ENCODE measurements at regions of chr1 and their contacts with region 1.

Region 1: GRCh38 chr1:227886993-227887696 is 60.6 kb downstream of the WNT9A start:
- DNase-seq: peak; percentile 73 to 81
- ATAC-seq: peak; percentile 60 to 86 (median 78)
- H3K4me3 ChIP-seq: peak overlapping the region; percentile 40 to 61 (median 53)
- H3K27ac ChIP-seq: peak overlapping the region; percentile 73 to 95 (median 86)
- H3K4me1 ChIP-seq: peaks cover 15 to 31% (median 24%) of the 10 kb centered on the region in 9 donors
- H3K27me3 ChIP-seq: peaks cover 0 to 13% (median 0%) of the 10 kb centered on the region in 7 donors
- CTCF ChIP-seq: no peak

Region 2: DNA sequence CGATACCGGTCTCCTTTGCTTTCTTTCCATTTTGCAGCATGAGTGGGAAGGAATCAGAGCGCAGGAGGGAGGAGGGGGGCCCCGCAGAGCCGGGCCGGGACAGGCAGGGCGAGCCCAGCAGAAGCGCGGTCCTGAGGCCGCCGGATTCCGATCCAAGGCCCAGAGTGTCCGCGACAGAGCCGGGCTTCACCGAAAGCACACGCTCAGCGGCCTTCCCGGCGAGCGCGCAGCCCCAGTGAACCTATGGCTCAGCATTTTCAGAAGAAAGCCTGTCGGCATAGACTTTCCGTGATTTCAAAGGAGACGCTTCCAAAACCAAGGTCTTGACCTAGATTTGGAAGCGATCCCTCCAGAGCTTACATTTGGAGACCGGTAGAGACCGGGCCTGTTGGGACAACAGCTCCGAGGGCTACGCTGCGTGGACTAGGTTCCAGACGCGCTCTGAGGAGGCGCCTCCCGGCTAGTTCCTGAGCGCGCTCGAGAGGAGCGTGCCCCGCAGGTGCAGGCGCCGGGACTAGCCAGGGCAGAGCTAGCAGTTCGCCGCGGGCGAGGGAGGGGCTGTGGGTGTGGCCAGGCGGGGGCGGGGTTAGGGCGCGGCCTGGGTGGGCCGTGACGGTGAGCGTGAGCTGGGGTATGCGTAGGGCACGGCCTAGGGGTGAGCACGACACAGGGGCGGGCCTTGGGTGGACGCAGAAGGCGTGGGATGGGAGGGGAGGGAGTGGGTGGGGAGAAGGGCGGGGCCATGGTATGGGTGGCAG is 99.5 kb before region 1 on chr1:
- intact Hi-C with region 1: loop called in 2 of 10 experiments (anchors 5 to 10 kb)
- DNase-seq: peak; percentile 91 to 92
- ATAC-seq: peak; percentile 94 to 97 (median 95)
- H3K4me3 ChIP-seq: peak overlapping the region; percentile 33 to 72 (median 62)
- H3K27ac ChIP-seq: peak overlapping the region in 9 of 10 donors; percentile 53 to 82 (median 70)
- H3K4me1 ChIP-seq: peaks cover 10 to 27% (median 23%) of the 10 kb centered on the region in 9 donors
- H3K27me3 ChIP-seq: peaks cover 0 to 33% (median 0%) of the 10 kb centered on the region in 7 donors
- CTCF ChIP-seq: no peak

Region 3: DNA sequence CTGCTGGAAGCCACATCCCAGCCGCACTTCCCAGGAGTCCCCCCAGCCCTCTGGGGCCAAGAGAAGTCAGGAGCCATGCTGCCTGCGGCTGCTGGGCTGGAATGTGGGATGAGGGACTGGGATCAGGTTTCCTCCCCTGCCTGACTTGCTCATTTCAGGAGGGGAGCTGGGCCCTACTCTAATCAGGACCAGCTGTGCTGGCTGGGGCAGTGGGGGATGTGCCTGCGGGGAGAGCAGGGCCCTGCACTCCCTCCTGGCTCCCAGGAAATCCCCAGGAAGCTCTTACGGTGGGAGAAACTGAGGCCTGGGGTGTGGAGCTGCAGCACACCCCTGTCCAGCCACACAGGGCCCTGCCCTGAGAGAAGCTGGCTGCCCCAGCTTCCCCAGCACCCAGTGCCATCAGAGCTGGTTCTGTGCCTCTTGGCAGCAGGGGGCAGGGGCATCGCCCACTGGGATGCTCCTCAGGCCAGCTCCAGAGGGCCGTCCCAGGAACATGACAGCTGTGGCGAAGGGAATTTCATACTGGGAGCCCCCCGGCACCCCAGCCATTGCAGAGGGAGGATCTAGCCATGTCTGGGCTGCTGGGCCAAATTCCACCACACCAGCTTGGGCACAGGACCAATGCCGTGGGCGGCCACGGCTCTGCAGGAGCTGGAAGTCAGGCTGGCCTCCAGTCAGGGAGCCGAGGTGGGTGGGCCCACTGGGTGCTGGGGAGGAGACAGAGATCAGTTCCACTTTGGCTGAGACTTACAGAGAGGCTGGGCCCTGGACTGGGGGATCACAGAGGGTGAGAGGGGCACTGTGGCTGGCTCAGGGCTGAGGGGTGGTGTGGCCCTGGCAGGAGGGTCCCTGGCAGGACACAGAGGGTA is 93.0 kb before region 1 on chr1:
- intact Hi-C with region 1: loop called in 2 of 10 experiments (anchors 5 to 10 kb)
- DNase-seq: peak; percentile 54 to 55
- ATAC-seq: peak; percentile 35 to 69 (median 57)
- H3K4me3 ChIP-seq: no peak overlapping the region
- H3K27ac ChIP-seq: peak overlapping the region in 3 of 10 donors; percentile 12 to 63 (median 47)
- H3K4me1 ChIP-seq: peaks cover 0 to 17% (median 4%) of the 10 kb centered on the region in 9 donors
- H3K27me3 ChIP-seq: peaks cover 0 to 7% (median 0%) of the 10 kb centered on the region in 7 donors
- CTCF ChIP-seq: no peak

Measured in heart right ventricle (tissue), 16 donors.